Left colon (tissue), 2 donors: ENCODE measurements at regions of chr7 and their contacts with region 1.

Region 1: GRCh38 chr7:47361746-47362215 is 220.1 kb downstream of the TNS3 start:
- DNase-seq: no peak
- ATAC-seq: no peak

Region 2: GRCh38 chr7:47277321-47277792 is 84.4 kb before region 1 on chr7:
- intact Hi-C with region 1: loop called in 1 of 2 experiments (anchors 5 kb)
- DNase-seq: no peak
- ATAC-seq: no peak